ENCODE measurements at regions of chr20 and their contacts with region 1.

Region 1: DNA sequence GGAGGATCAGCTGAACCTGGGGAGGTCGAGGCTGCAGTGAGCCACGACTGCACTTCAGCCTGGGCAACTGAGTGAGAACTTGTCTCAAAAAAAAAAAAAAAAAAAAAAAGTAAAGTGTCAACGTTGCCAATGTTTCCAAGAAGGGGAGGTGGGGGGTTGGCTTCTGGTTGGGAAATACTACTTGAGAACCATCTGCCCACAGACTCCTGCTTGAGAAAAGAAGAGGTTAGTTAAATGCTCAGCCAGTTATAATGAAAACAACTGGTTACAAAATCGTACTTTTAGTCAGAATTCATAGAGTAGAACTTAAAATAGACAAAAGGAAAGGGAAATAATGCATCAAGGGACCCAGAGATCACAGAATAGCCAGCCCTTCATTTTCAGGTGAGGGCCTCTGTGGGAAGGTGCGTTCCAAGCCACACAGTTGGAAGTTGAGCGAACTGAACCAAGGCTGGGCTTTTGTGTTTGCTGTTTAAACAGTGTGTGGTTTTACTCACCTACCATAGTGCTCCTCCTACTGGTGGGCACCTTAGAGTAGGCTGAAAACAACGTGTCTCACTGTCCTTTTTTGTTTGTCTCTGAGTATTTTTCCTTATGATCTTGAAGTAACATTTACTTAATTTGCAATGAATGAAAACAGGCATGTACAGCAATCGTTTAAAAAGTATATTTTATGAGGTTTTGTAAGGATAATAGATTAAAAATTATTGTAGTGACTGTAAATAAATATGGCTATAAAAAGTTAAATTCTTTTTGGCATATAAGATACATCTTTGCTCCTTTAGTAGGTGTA is 200.7 kb downstream of the BCAS1 start:
- DNase-seq: peak; percentile 93
- H3K4me3 ChIP-seq: peak overlapping the region; percentile 18
- H3K27ac ChIP-seq: peak overlapping the region; percentile 92
- H3K4me1 ChIP-seq: peaks cover 89% of the 10 kb centered on the region
- CTCF ChIP-seq: peak; percentile 98

Region 2: GRCh38 chr20:53578492-53579222 is 291.0 kb before region 1 on chr20:
- CTCF ChIA-PET with region 1: no interaction called
- POLR2A ChIA-PET with region 1: interaction called, 5 read pairs
- intact Hi-C with region 1: loop called (anchors 1 kb)
- DNase-seq: peak; percentile 93
- H3K4me3 ChIP-seq: peak overlapping the region; percentile 68
- H3K27ac ChIP-seq: peak overlapping the region; percentile 96
- H3K4me1 ChIP-seq: peaks cover 58% of the 10 kb centered on the region
- CTCF ChIP-seq: peak; percentile 97

Region 3: GRCh38 chr20:53750827-53751619 is 118.6 kb before region 1 on chr20:
- CTCF ChIA-PET with region 1: no interaction called
- POLR2A ChIA-PET with region 1: interaction called, 11 read pairs
- intact Hi-C with region 1: loop called (anchors 5 kb)
- DNase-seq: peak; percentile 86
- H3K4me3 ChIP-seq: peak overlapping the region; percentile 27
- H3K27ac ChIP-seq: peak overlapping the region; percentile 73
- H3K4me1 ChIP-seq: peaks cover 56% of the 10 kb centered on the region
- CTCF ChIP-seq: 0 out of 2 replicates have a peak, but pooled peaks have one; percentile 16

Region 4: GRCh38 chr20:53847129-53847836 is 22.4 kb before region 1 on chr20:
- CTCF ChIA-PET with region 1: no interaction called
- POLR2A ChIA-PET with region 1: interaction called, 139 read pairs
- intact Hi-C with region 1: loop called (anchors 2 kb)
- DNase-seq: peak; percentile 82
- H3K4me3 ChIP-seq: peak overlapping the region; percentile 59
- H3K27ac ChIP-seq: peak overlapping the region; percentile 87
- H3K4me1 ChIP-seq: peaks cover 74% of the 10 kb centered on the region
- CTCF ChIP-seq: no peak

Region 5: GRCh38 chr20:53899351-53900167 is 29.9 kb after region 1 on chr20:
- CTCF ChIA-PET with region 1: interaction called, 4 read pairs
- POLR2A ChIA-PET with region 1: interaction called, 41 read pairs
- intact Hi-C with region 1: loop called (anchors 1 kb)
- DNase-seq: peak; percentile 93
- H3K4me3 ChIP-seq: peak overlapping the region; percentile 47
- H3K27ac ChIP-seq: peak overlapping the region; percentile 94
- H3K4me1 ChIP-seq: peaks cover 84% of the 10 kb centered on the region
- CTCF ChIP-seq: no peak

Region 6: GRCh38 chr20:53926428-53927028 is 56.9 kb after region 1 on chr20:
- CTCF ChIA-PET with region 1: no interaction called
- POLR2A ChIA-PET with region 1: interaction called, 13 read pairs
- intact Hi-C with region 1: loop called (anchors 5 kb)
- DNase-seq: peak; percentile 95
- H3K4me3 ChIP-seq: peak overlapping the region; percentile 59
- H3K27ac ChIP-seq: peak overlapping the region; percentile 99
- H3K4me1 ChIP-seq: peaks cover 95% of the 10 kb centered on the region
- CTCF ChIP-seq: no peak

Region 7: GRCh38 chr20:54025251-54025771 is 155.6 kb after region 1 on chr20:
- CTCF ChIA-PET with region 1: no interaction called
- POLR2A ChIA-PET with region 1: no interaction called
- intact Hi-C with region 1: no loop called
- DNase-seq: no peak
- H3K4me3 ChIP-seq: no peak overlapping the region
- H3K27ac ChIP-seq: no peak overlapping the region
- H3K4me1 ChIP-seq: no peaks in the 10 kb centered on the region
- CTCF ChIP-seq: no peak

Region 8: GRCh38 chr20:54863058-54863700 is 993.5 kb after region 1 on chr20:
- CTCF ChIA-PET with region 1: no interaction called
- POLR2A ChIA-PET with region 1: no interaction called
- intact Hi-C with region 1: no loop called
- DNase-seq: no peak
- H3K4me3 ChIP-seq: no peak overlapping the region
- H3K27ac ChIP-seq: no peak overlapping the region
- H3K4me1 ChIP-seq: no peaks in the 10 kb centered on the region
- CTCF ChIP-seq: no peak